T-cell (primary cell): ENCODE measurements at regions of chr15 and their contacts with region 1.

Region 1: DNA sequence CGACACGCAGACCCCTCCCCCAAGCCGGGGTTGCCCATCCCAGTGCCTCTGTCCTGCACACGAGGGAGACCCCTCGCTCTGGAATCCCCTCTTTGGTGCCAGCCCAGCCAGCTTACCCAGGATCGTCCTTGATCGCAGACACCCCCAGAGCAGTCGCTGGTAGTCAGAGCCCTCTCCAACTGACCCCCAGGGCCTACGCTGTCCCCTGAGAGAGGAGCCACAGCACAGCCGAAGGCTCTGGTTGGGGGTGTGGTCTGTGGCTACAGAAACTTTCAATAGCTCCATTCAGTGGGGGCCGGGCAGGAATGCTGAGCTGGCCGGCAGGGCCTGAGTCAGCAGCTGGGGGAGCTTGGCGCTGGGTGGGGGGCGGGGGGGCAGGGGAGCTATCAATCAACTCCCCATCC is at the start of gene LCTL:
- DNase-seq: no peak
- ATAC-seq: no peak
- H3K4me3 ChIP-seq: no peak within 1 kb of the TSS
- H3K4me3 Mint-ChIP-seq: no peak within 1 kb of the TSS
- H3K27ac ChIP-seq: no peak within 1 kb of the TSS
- H3K27ac Mint-ChIP-seq: no peak within 1 kb of the TSS
- H3K4me1 ChIP-seq: peaks cover 0 to 6% of the 10 kb centered on the region in 2 experiments
- H3K4me1 Mint-ChIP-seq: peaks cover 4 to 8% (median 6%) of the 10 kb centered on the region in 3 donors
- H3K27me3 ChIP-seq: peaks cover 0 to 2% of the 10 kb centered on the region in 2 experiments
- H3K27me3 Mint-ChIP-seq: no peaks in the 10 kb centered on the region
- total RNA-seq, gene LCTL: not detected

Region 2: DNA sequence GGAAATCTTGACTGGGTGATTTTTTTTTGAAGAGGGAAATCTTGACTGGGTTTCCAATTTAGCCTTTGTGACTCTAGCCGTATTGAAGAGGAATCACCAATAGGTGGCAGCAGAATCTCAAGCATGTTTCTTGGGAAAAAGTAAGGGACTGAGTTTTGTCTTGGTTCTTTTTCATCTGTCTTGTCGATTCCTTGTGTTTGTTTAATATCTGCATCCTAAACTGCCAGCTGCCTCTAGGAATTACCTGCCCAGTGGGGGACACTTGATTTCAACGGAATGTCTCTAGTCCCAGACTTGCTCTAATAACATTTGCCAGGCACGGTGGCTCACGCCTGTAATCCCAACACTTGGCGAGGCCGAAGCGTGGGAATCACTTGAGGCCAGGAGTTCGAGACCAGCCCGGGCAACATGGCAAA is 1879.5 kb before region 1 on chr15:
- CTCF ChIA-PET with region 1: interaction called in 1 of 2 experiments, 12 read pairs
- POLR2A ChIA-PET with region 1: no interaction called
- DNase-seq: peak in 9 of 35 experiments; percentile 8 to 73 (median 20)
- ATAC-seq: peak in 1 of 4 experiments; percentile 35
- H3K4me3 ChIP-seq: no peak overlapping the region
- H3K4me3 Mint-ChIP-seq: no peak overlapping the region
- H3K27ac ChIP-seq: no peak overlapping the region
- H3K27ac Mint-ChIP-seq: no peak overlapping the region
- H3K4me1 ChIP-seq: no peaks in the 10 kb centered on the region
- H3K4me1 Mint-ChIP-seq: peaks cover 2 to 4% (median 3%) of the 10 kb centered on the region in 3 donors
- H3K27me3 ChIP-seq: no peaks in the 10 kb centered on the region
- H3K27me3 Mint-ChIP-seq: no peaks in the 10 kb centered on the region